ENCODE measurements at regions of chr3 and their contacts with region 1.

Region 1: DNA sequence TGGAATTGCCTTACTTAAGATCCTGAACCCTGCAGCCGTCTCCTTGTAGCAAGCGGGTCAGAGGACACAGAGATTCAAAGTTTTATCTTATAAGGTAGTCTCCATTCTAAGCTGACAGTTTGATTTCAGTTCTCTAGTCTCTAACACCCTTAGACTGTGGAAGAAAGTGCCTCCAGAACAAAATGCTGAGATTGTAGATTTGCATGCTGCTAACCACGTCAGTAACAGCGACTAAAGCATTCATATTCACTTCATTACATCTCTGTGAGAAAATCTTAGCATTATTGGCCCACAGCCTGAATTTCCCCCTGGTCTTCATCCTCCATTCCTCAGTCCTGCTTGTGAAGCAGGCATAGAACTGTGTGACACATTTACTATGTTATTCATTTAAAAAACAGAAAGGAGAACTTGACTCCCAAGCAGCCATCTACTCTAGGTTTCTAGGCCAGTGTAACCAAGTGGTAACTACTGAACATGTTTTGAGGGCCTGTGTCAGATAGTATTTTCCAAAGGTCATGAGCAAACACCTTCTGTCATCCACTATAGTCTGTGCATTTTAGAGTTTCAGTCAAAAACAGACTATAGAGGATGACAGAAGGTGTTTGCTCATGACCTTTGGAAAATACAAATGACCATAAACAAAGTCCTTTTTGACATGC is 27.4 kb downstream of the ARIH2 start:
- DNase-seq: no peak
- H3K4me3 ChIP-seq: no peak overlapping the region
- H3K27ac ChIP-seq: peak overlapping the region in 51 of 59 donors; percentile 1 to 76 (median 56)
- H3K27me3 ChIP-seq: no peaks in the 10 kb centered on the region
- CTCF ChIP-seq: no peak

Region 2: GRCh38 chr3:48727511-48727910 is 218.5 kb before region 1 on chr3:
- intact Hi-C with region 1: no loop called
- DNase-seq: peak in 1 of 10 donors; percentile 83
- H3K4me3 ChIP-seq: no peak overlapping the region
- H3K27ac ChIP-seq: no peak overlapping the region
- H3K27me3 ChIP-seq: no peaks in the 10 kb centered on the region
- CTCF ChIP-seq: no peak

Region 3: GRCh38 chr3:48835650-48836366 is 110.2 kb before region 1 on chr3:
- intact Hi-C with region 1: no loop called
- DNase-seq: no peak
- H3K4me3 ChIP-seq: no peak overlapping the region
- H3K27ac ChIP-seq: no peak overlapping the region
- H3K27me3 ChIP-seq: no peaks in the 10 kb centered on the region
- CTCF ChIP-seq: no peak

Region 4: GRCh38 chr3:48918388-48919214 is 27.4 kb before region 1 on chr3 and contains the start of gene ARIH2:
- intact Hi-C with region 1: loop called in 1 of 2 experiments (anchors 2 kb)
- DNase-seq: peak; percentile 84 to 96 (median 91)
- H3K4me3 ChIP-seq: peak within 1 kb of the TSS; percentile 56 to 98 (median 94)
- H3K27ac ChIP-seq: peak within 1 kb of the TSS; percentile 66 to 99 (median 96)
- H3K27me3 ChIP-seq: no peaks in the 10 kb centered on the region
- CTCF ChIP-seq: peak in 42 of 56 donors; percentile 4 to 67 (median 42)
- total RNA-seq, gene ARIH2: 88.9 to 207 (median 127) TPM

Region 5: GRCh38 chr3:49181351-49181750 is 235.3 kb after region 1 on chr3:
- intact Hi-C with region 1: no loop called
- DNase-seq: no peak
- H3K4me3 ChIP-seq: no peak overlapping the region
- H3K27ac ChIP-seq: no peak overlapping the region
- H3K27me3 ChIP-seq: peaks cover 0 to 6% (median 0%) of the 10 kb centered on the region in 45 donors
- CTCF ChIP-seq: no peak

Region 6: GRCh38 chr3:49723628-49724551 is 777.9 kb after region 1 on chr3 and contains the start of gene GMPPB:
- intact Hi-C with region 1: no loop called
- DNase-seq: peak; percentile 93 to 98 (median 97)
- H3K4me3 ChIP-seq: peak within 1 kb of the TSS; percentile 70 to 100 (median 96)
- H3K27ac ChIP-seq: peak within 1 kb of the TSS in 56 of 59 donors; percentile 18 to 93 (median 84)
- H3K27me3 ChIP-seq: no peaks in the 10 kb centered on the region
- CTCF ChIP-seq: peak in 14 of 56 donors; percentile 13 to 40 (median 26)
- total RNA-seq, gene GMPPB: 10.6 to 25.4 (median 17.0) TPM